Caco-2 (cell line): ENCODE measurements at regions of chr1 and their contacts with region 1.

Region 1: GRCh38 chr1:56709269-56709880 is 64.3 kb downstream of the PRKAA2 start:
- DNase-seq: peak in 1 of 2 experiments; percentile 41
- H3K4me3 ChIP-seq: no peak overlapping the region
- H3K4me3 Mint-ChIP-seq: no peak overlapping the region
- H3K27ac Mint-ChIP-seq: no peak overlapping the region
- H3K4me1 ChIP-seq: peaks cover 9% of the 10 kb centered on the region; the same call in 1 of the 2 replicates
- H3K4me1 Mint-ChIP-seq: no peaks in the 10 kb centered on the region
- H3K27me3 ChIP-seq: no peaks in the 10 kb centered on the region
- H3K27me3 Mint-ChIP-seq: no peaks in the 10 kb centered on the region
- CTCF ChIP-seq: peak in 1 of 2 experiments; percentile 48

Region 2: DNA sequence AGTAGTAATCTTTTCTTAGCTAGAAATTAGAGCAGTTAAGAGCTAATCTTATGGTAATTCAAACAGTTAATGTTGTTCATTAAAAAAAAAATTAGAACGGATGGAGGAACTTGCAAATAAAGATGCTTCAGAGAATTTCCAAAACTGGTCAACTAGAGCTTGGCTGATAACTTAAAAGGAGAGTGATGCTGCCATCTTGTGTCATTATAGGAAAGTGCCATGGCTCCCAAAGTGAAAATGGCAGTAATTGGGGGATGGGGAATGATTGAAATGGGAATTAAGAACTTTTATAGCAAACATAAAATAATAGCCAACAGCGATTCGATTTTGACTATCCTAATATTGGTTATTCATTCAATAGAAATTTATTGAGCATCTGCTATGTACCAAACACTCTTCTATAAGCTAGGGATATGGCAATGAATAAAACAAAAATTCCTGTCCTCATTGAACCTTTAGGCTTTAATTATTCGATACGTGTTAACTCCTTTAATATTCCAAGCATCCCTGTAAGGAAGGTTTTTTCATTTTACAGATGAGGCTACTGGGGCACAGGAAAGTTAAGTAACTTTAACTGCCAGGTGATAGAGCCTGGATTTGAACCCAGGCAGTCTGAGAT is 124.4 kb before region 1 on chr1:
- CTCF ChIA-PET with region 1: no interaction called
- POLR2A ChIA-PET with region 1: no interaction called
- intact Hi-C with region 1: loop called (anchors 2 kb)
- DNase-seq: peak in 1 of 2 experiments; percentile 52
- H3K4me3 ChIP-seq: no peak overlapping the region
- H3K4me3 Mint-ChIP-seq: no peak overlapping the region
- H3K27ac Mint-ChIP-seq: no peak overlapping the region
- H3K4me1 ChIP-seq: peaks cover 1% of the 10 kb centered on the region; the same call in 1 of the 2 replicates
- H3K4me1 Mint-ChIP-seq: peaks cover 11% of the 10 kb centered on the region
- H3K27me3 ChIP-seq: no peaks in the 10 kb centered on the region
- H3K27me3 Mint-ChIP-seq: no peaks in the 10 kb centered on the region
- CTCF ChIP-seq: peak; percentile 51 to 61

Region 3: GRCh38 chr1:56644919-56645676 is 64.3 kb before region 1 on chr1 and contains the start of gene PRKAA2:
- CTCF ChIA-PET with region 1: no interaction called
- POLR2A ChIA-PET with region 1: no interaction called
- intact Hi-C with region 1: loop called (anchors 10 kb)
- DNase-seq: peak; percentile 50 to 71
- H3K4me3 ChIP-seq: peak within 1 kb of the TSS; percentile 78
- H3K4me3 Mint-ChIP-seq: peak within 1 kb of the TSS; percentile 70
- H3K27ac Mint-ChIP-seq: peak within 1 kb of the TSS; percentile 82
- H3K4me1 ChIP-seq: peaks cover 6% of the 10 kb centered on the region; the same call in 1 of the 2 replicates
- H3K4me1 Mint-ChIP-seq: no peaks in the 10 kb centered on the region
- H3K27me3 ChIP-seq: no peaks in the 10 kb centered on the region
- H3K27me3 Mint-ChIP-seq: no peaks in the 10 kb centered on the region
- CTCF ChIP-seq: no peak
- total RNA-seq, gene PRKAA2: 5.8 and 5.9 TPM in 2 replicates

Region 4: GRCh38 chr1:56676571-56677035 is 32.8 kb before region 1 on chr1:
- CTCF ChIA-PET with region 1: no interaction called
- POLR2A ChIA-PET with region 1: no interaction called
- intact Hi-C with region 1: no loop called
- DNase-seq: no peak
- H3K4me3 ChIP-seq: no peak overlapping the region
- H3K4me3 Mint-ChIP-seq: no peak overlapping the region
- H3K27ac Mint-ChIP-seq: no peak overlapping the region
- H3K4me1 ChIP-seq: no peaks in the 10 kb centered on the region
- H3K4me1 Mint-ChIP-seq: peaks cover 7% of the 10 kb centered on the region
- H3K27me3 ChIP-seq: no peaks in the 10 kb centered on the region
- H3K27me3 Mint-ChIP-seq: no peaks in the 10 kb centered on the region
- CTCF ChIP-seq: no peak